Naive thymus-derived CD8-positive, alpha-beta T cell (primary cell): ENCODE measurements at regions of chr17 and their contacts with region 1.

Region 1: DNA sequence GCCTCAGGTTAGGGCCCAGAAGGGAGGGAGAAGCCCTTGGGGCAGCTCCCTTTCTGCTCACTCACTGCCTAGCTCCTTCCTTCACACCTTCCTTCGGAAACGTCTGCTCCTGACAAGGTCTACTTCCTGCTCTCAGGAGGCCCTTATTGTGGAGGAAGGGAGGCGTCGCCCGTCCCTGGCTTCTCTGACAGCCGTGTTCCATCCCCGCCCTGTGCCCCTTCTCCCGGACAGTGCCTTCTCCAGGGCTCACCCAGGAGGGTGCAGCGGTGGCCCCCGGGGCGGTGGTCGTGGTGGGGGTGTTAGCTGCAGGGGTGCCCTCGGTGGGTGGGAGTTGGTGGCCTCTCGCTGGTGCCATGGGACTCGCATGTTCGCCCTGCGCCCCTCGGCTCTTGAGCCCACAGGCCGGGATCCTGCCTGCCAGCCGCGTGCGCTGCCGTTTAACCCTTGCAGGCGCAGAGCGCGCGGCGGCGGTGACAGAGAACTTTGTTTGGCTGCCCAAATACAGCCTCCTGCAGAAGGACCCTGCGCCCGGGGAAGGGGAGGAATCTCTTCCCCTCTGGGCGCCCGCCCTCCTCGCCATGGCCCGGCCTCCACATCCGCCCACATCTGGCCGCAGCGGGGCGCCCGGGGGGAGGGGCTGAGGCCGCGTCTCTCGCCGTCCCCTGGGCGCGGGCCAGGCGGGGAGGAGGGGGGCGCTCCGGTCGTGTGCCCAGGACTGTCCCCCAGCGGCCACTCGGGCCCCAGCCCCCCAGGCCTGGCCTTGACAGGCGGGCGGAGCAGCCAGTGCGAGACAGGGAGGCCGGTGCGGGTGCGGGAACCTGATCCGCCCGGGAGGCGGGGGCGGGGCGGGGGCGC is 231.9 kb downstream of the SEC14L1 start:
- DNase-seq: peak; percentile 36 to 74 (median 60)
- ATAC-seq: peak; percentile 26 to 32
- H3K4me3 Mint-ChIP-seq: peak overlapping the region; percentile 73 to 92 (median 84)
- H3K27ac Mint-ChIP-seq: peak overlapping the region; percentile 74 to 92 (median 87)
- H3K4me1 Mint-ChIP-seq: peaks cover 50 to 77% (median 61%) of the 10 kb centered on the region in 4 donors
- H3K27me3 Mint-ChIP-seq: peaks cover 0 to 1% (median 0%) of the 10 kb centered on the region in 5 donors

Region 2: DNA sequence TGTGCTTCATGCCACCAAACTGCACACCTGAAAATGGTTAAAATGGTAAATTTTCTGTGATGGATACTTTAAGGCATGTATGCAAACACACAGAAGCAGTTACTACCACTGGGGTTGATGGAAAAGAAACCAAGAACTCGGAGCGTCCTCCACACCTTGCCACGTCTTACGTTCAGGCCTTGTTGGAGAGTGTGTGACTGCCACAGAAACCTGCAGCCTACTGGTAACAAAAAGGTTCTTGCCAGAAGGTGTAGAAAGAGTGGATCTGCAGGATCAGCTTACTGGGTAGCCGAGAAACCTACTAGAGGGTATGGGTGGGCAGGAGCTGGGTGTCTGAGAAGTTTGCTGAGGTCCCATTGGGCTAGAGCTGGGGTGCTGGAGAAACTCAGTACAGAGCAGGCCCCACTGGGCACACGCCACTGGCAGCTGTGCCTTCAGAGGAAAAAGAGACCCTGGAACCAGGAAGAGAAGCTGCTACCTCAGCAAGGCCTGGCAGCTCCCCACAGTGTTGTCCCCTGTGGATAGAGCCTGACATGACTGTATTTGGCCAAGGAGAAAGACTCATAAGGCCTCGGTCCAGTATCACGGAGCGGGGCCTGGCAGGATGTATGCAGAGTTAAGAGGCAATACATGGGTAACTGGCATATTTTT is 27.3 kb before region 1 on chr17:
- POLR2A ChIA-PET with region 1: interaction called, 11 read pairs
- DNase-seq: no peak
- ATAC-seq: no peak
- H3K4me3 Mint-ChIP-seq: no peak overlapping the region
- H3K27ac Mint-ChIP-seq: peak overlapping the region in 6 of 10 donors; percentile 0 to 65 (median 48)
- H3K4me1 Mint-ChIP-seq: peaks cover 33 to 53% (median 49%) of the 10 kb centered on the region in 4 donors
- H3K27me3 Mint-ChIP-seq: no peaks in the 10 kb centered on the region

Region 3: GRCh38 chr17:77391668-77392375 is 19.2 kb after region 1 on chr17:
- POLR2A ChIA-PET with region 1: interaction called, 143 read pairs
- DNase-seq: peak in 3 of 10 donors; percentile 30 to 43 (median 38)
- ATAC-seq: peak; percentile 47 to 48
- H3K4me3 Mint-ChIP-seq: peak overlapping the region; percentile 36 to 78 (median 68)
- H3K27ac Mint-ChIP-seq: peak overlapping the region; percentile 75 to 90 (median 87)
- H3K4me1 Mint-ChIP-seq: peaks cover 45 to 91% (median 84%) of the 10 kb centered on the region in 4 donors
- H3K27me3 Mint-ChIP-seq: no peaks in the 10 kb centered on the region

Region 4: GRCh38 chr17:77416105-77416713 is 43.5 kb after region 1 on chr17:
- POLR2A ChIA-PET with region 1: interaction called, 224 read pairs
- DNase-seq: no peak
- ATAC-seq: peak in 1 of 2 donors; percentile 13
- H3K4me3 Mint-ChIP-seq: peak overlapping the region in 7 of 10 donors; percentile 11 to 55 (median 32)
- H3K27ac Mint-ChIP-seq: peak overlapping the region in 8 of 10 donors; percentile 22 to 76 (median 66)
- H3K4me1 Mint-ChIP-seq: peaks cover 23 to 81% (median 70%) of the 10 kb centered on the region in 4 donors
- H3K27me3 Mint-ChIP-seq: no peaks in the 10 kb centered on the region

Region 5: DNA sequence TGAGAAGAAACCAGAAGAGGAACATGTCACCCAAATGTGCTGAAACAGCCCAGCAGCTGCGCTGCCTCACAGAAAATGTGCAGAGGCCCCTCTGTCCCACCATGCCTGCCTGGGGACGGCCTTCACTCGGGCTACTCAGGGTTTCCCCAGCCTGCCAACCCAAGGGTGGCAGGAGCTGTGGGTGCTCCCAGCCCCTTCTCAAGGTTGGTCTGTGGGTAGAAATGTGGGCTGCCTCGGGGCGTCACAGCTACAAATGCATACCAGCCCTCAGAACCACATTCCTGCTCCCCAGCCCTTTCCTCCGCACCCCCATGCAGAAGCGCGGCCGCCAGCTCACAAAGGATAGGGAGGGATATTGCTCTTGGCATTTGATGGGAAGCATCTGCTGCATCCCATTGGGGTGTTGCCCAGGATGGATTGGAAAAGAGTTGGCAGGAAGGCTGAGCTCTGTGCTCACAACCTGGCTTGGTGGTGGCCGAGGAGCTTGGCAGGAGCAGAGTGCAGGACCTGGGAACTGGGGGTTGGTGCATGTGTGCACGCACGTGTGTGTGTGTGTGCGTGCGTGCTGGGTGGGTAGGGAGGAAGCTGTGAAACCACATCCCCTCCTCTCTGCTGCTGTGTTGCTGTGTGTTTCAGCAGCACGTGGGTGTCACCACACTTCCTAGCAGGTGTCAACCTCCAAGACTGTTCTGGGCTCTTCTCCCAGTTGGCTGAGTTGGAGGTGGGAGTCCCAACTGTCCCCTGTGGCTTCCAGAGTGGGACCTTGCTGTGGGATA is 72.5 kb after region 1 on chr17:
- POLR2A ChIA-PET with region 1: interaction called, 74 read pairs
- DNase-seq: peak; percentile 67 to 98 (median 88)
- ATAC-seq: peak; percentile 60 to 77
- H3K4me3 Mint-ChIP-seq: peak overlapping the region; percentile 72 to 99 (median 86)
- H3K27ac Mint-ChIP-seq: peak overlapping the region; percentile 93 to 100 (median 99)
- H3K4me1 Mint-ChIP-seq: peaks cover 59 to 98% (median 96%) of the 10 kb centered on the region in 4 donors
- H3K27me3 Mint-ChIP-seq: peaks cover 0 to 4% (median 0%) of the 10 kb centered on the region in 5 donors

Region 6: DNA sequence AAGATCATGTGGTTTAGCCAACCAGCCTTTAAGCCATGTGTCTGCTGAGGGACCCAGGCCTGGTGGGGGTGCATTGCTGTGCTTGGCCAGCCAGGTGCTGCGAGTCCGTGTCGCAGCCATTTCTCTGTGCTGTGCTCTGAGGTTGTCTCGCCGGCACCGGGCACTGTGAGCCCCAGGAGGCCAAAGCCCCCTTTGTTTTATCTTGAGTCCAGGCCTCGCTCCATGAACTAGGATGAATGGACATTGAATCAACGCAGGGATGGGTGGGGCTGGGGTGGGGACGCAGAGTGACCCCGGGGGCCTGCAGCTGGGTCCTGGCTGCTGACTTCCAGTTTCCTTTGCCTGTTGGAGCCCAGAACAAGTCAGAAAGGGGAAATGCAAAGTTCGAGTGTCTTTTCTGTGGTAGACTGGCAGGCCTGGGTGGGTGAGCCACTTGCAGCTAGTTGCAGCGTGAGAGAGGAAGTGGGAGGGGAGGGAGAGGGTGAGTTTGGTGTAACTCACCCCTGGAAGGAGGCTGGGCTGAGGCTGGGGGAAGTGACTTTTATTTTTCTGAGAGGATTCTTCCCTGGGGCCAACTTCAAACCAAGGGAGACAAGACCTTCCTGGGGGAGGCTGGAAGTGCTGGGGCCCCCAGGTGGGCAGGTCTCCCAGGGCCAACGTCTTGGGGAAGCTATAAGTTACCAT is 92.8 kb after region 1 on chr17:
- POLR2A ChIA-PET with region 1: interaction called, 13 read pairs
- DNase-seq: peak in 9 of 10 donors; percentile 70 to 92 (median 80)
- ATAC-seq: peak; percentile 82 to 95
- H3K4me3 Mint-ChIP-seq: peak overlapping the region; percentile 70 to 88 (median 81)
- H3K27ac Mint-ChIP-seq: peak overlapping the region; percentile 75 to 99 (median 94)
- H3K4me1 Mint-ChIP-seq: peaks cover 48 to 94% (median 92%) of the 10 kb centered on the region in 4 donors
- H3K27me3 Mint-ChIP-seq: no peaks in the 10 kb centered on the region

Region 7: DNA sequence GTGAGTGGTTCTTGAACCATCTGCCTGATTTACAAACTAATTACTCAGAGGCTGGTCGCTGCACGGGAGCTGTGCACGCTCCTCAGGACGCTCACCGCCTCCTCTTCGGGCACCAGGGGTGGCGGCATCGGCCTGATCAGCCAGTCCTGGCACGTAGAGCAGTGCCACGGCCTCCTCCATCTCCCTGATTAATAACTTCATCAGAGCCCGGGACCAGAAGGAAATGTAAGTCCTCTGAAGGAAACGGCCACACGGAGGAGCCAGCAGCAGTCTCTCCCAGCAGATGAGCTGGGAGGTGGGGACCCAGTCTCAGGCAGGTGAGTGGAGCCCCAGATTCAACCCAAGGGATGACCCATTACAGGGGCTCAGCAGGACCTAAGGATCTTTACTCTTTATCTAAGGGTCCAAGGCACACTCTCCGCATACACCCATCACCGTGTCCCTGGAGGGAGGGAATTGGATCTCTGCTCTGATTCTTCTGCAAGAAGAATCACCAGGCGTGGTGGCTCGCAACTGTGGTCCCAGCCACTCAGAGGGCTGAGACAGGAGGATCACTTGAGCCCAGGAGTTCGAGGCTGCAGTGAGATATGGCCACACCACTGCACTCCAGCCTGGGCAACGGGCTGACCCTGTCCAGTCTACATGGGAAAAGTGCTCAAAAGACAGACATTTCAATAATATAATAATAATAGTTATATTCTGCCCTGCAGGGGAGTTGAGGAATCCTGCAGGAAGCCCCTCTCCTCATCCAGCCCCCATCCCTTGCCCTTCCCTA is 134.6 kb after region 1 on chr17:
- POLR2A ChIA-PET with region 1: no interaction called
- DNase-seq: peak in 1 of 10 donors; percentile 56
- ATAC-seq: no peak
- H3K4me3 Mint-ChIP-seq: no peak overlapping the region
- H3K27ac Mint-ChIP-seq: peak overlapping the region in 2 of 10 donors; percentile 2 to 8
- H3K4me1 Mint-ChIP-seq: no peaks in the 10 kb centered on the region
- H3K27me3 Mint-ChIP-seq: no peaks in the 10 kb centered on the region